ENCODE measurements at regions of chr3 and their contacts with region 1.

Region 1: DNA sequence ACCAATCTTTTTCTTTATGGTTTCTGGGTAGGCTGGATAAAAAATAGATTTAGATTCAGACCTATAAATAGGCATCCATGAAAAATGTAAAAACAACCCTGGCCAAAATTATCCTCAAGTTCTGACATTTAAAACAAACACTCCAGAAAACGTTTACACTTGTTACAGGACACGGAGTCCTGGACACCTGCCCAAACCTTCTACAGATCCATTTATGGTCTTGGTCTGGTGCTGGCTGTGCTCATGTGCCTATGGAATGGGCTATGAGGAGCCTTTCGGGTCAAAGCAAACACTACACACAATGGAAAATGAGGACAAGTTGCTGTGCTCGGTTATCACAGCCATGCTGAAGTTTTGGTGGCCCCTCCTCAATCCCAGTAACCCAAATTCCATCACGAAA is 108.1 kb downstream of the PDZRN3 start:
- DNase-seq: peak; percentile 35 to 62
- ATAC-seq: peak; percentile 55 to 75
- H3K4me3 ChIP-seq: peak overlapping the region; percentile 10 to 38 (median 14)
- H3K27ac ChIP-seq: peak overlapping the region; percentile 67 to 79 (median 70)
- H3K4me1 ChIP-seq: peaks cover 35 to 45% of the 10 kb centered on the region in 2 donors
- H3K27me3 ChIP-seq: no peaks in the 10 kb centered on the region
- CTCF ChIP-seq: no peak
- POLR2A ChIP-seq: no peak

Region 2: DNA sequence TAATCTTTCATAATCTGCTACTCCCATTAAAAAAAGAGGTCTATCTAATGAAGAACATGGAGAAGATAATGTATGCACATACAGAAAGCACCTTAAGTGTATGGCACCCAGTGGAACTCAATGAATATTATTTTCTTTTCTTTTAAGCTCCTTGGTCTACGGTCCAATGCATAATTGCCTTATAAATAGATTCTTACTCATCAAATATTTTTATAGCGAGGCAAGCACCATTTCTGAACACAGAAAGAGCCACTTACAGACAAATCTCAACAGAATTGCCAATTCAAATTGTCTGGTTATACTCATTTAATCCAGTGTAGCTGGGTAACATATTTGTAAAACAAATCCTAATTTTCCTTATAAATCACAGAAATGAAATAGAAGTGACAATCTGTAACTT is 101.8 kb after region 1 on chr3:
- in situ Hi-C with region 1: loop called in 2 of 4 experiments (anchors 5 kb)
- intact Hi-C with region 1: no loop called
- DNase-seq: no peak
- ATAC-seq: no peak
- H3K4me3 ChIP-seq: no peak overlapping the region
- H3K27ac ChIP-seq: peak overlapping the region; percentile 71 to 94 (median 84)
- H3K4me1 ChIP-seq: peaks cover 86 to 87% of the 10 kb centered on the region in 2 donors
- H3K27me3 ChIP-seq: no peaks in the 10 kb centered on the region
- CTCF ChIP-seq: no peak
- POLR2A ChIP-seq: no peak

Region 3: GRCh38 chr3:74149466-74149865 is 632.8 kb after region 1 on chr3:
- in situ Hi-C with region 1: no loop called
- intact Hi-C with region 1: no loop called
- DNase-seq: no peak
- ATAC-seq: no peak
- H3K4me3 ChIP-seq: no peak overlapping the region
- H3K27ac ChIP-seq: no peak overlapping the region
- H3K4me1 ChIP-seq: no peaks in the 10 kb centered on the region
- H3K27me3 ChIP-seq: no peaks in the 10 kb centered on the region
- CTCF ChIP-seq: no peak
- POLR2A ChIP-seq: no peak

Measured in gastrocnemius medialis (tissue), 4 donors.